SK-N-SH (cell line): ENCODE measurements at regions of chr5 and their contacts with region 1.

Region 1: DNA sequence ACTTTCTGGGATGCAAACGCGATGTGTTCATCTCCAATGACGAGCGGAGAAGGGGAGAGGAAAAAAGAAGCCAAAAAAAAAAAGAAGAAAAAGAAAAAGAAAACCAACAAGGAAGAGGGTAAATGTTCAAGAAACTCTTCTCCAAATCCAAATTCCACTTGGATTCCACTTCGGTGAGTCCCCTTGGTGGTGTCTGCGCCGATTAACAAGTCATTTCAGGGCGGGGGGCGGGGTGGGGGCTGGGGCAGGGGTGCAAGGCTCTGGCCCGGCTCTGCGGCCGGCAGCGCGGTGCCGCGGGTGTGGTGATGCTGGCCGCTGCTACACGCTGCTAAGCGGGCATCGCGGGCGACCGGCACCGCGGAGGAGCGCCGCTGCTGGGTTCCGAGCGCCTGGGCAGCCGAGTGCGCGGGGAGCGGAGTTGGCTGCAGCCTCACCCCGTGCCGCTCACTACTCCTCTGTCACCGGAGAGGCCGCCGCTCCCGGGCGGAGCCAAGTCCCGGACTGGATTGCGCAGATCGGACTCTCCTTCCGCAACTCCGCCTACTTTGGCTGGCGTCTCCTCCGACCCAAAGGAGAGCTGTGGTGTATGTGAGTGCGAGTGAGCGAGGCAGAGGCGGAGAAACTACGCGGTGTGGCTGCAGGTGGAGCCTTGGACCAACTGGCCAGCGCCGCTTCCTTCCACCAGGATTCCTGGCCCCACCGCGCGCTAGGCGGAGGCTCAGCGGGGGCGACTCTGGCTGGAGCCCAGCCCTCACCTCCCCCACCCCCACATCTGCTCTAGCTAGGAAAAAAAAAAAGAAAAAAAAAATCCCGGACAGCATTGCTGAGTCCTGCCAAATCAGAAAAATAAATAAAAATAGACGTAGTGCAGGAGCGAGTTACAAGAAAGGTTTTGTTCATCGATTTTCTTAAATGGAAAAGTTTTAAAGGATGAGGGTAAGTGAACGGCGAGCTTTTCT is at the start of gene SEMA6A:
- DNase-seq: peak; percentile 90
- H3K4me3 ChIP-seq: peak within 1 kb of the TSS; percentile 56 to 76
- H3K27ac ChIP-seq: peak within 1 kb of the TSS in 1 of 2 experiments; percentile 73; a peak in 2 of 4 replicates
- H3K4me1 ChIP-seq: peaks cover 0 to 22% of the 10 kb centered on the region in 2 experiments; a peak in 1 of 4 replicates
- H3K27me3 ChIP-seq: peaks cover 55% of the 10 kb centered on the region
- CTCF ChIP-seq: no peak
- EP300 ChIP-seq: peak; percentile 19 to 24; a peak in 1 of 4 replicates
- RAD21 ChIP-seq: no peak; the same call in 1 of the 2 replicates
- polyA plus RNA-seq, gene SEMA6A: 0.18 and 0.29 TPM in 2 replicates

Region 2: GRCh38 chr5:116137544-116138378 is 436.9 kb before region 1 on chr5:
- CTCF ChIA-PET with region 1: interaction called, 13 read pairs
- POLR2A ChIA-PET with region 1: interaction called, 4 read pairs
- DNase-seq: peak; percentile 37
- H3K4me3 ChIP-seq: no peak overlapping the region
- H3K27ac ChIP-seq: no peak overlapping the region
- H3K4me1 ChIP-seq: no peaks in the 10 kb centered on the region
- H3K27me3 ChIP-seq: no peaks in the 10 kb centered on the region
- CTCF ChIP-seq: peak; percentile 91
- EP300 ChIP-seq: no peak
- RAD21 ChIP-seq: peak; percentile 92

Region 3: GRCh38 chr5:116557669-116558271 is 16.9 kb before region 1 on chr5:
- CTCF ChIA-PET with region 1: interaction called, 46 read pairs
- POLR2A ChIA-PET with region 1: no interaction called
- DNase-seq: peak; percentile 38
- H3K4me3 ChIP-seq: no peak overlapping the region
- H3K27ac ChIP-seq: no peak overlapping the region
- H3K4me1 ChIP-seq: peaks cover 0 to 4% of the 10 kb centered on the region in 2 experiments; a peak in 2 of 4 replicates
- H3K27me3 ChIP-seq: no peaks in the 10 kb centered on the region
- CTCF ChIP-seq: peak; percentile 66
- EP300 ChIP-seq: no peak
- RAD21 ChIP-seq: peak; percentile 70

Region 4: GRCh38 chr5:116595498-116595897 is 20.9 kb after region 1 on chr5:
- CTCF ChIA-PET with region 1: interaction called, 15 read pairs
- POLR2A ChIA-PET with region 1: no interaction called
- DNase-seq: no peak
- H3K4me3 ChIP-seq: no peak overlapping the region
- H3K27ac ChIP-seq: no peak overlapping the region
- H3K4me1 ChIP-seq: peaks cover 0 to 3% of the 10 kb centered on the region in 2 experiments; a peak in 1 of 4 replicates
- H3K27me3 ChIP-seq: no peaks in the 10 kb centered on the region
- CTCF ChIP-seq: no peak
- EP300 ChIP-seq: no peak
- RAD21 ChIP-seq: no peak

Region 5: GRCh38 chr5:116733991-116734975 is 159.6 kb after region 1 on chr5:
- CTCF ChIA-PET with region 1: no interaction called
- POLR2A ChIA-PET with region 1: no interaction called
- DNase-seq: no peak
- H3K4me3 ChIP-seq: no peak overlapping the region
- H3K27ac ChIP-seq: no peak overlapping the region
- H3K4me1 ChIP-seq: peaks cover 0 to 17% of the 10 kb centered on the region in 2 experiments; a peak in 2 of 4 replicates
- H3K27me3 ChIP-seq: no peaks in the 10 kb centered on the region
- CTCF ChIP-seq: no peak
- EP300 ChIP-seq: no peak
- RAD21 ChIP-seq: no peak